ENCODE measurements at regions of chr16 and their contacts with region 1.

Region 1: GRCh38 chr16:73196670-73197069 is 148.7 kb upstream of the ZFHX3 start:
- DNase-seq: peak; percentile 43
- H3K4me3 ChIP-seq: no peak overlapping the region
- H3K27ac ChIP-seq: no peak overlapping the region
- H3K4me1 ChIP-seq: no peaks in the 10 kb centered on the region
- H3K27me3 ChIP-seq: no peaks in the 10 kb centered on the region
- CTCF ChIP-seq: peak; percentile 81 to 87

Region 2: GRCh38 chr16:72664509-72665225 is 532.0 kb before region 1 on chr16:
- CTCF ChIA-PET with region 1: no interaction called
- dilution Hi-C with region 1: no loop called
- in situ Hi-C with region 1: no loop called
- intact Hi-C with region 1: loop called (anchors 5 kb)
- DNase-seq: peak; percentile 98
- H3K4me3 ChIP-seq: peak overlapping the region; percentile 74 to 85 (median 81)
- H3K27ac ChIP-seq: peak overlapping the region; percentile 86
- H3K4me1 ChIP-seq: peaks cover 10% of the 10 kb centered on the region
- H3K27me3 ChIP-seq: no peaks in the 10 kb centered on the region
- CTCF ChIP-seq: no peak

Region 3: GRCh38 chr16:72978212-72978611 is 218.5 kb before region 1 on chr16:
- CTCF ChIA-PET with region 1: no interaction called
- dilution Hi-C with region 1: no loop called
- in situ Hi-C with region 1: no loop called
- intact Hi-C with region 1: loop called (anchors 5 kb)
- DNase-seq: no peak
- H3K4me3 ChIP-seq: no peak overlapping the region
- H3K27ac ChIP-seq: no peak overlapping the region
- H3K4me1 ChIP-seq: peaks cover under 1% of the 10 kb centered on the region
- H3K27me3 ChIP-seq: no peaks in the 10 kb centered on the region
- CTCF ChIP-seq: no peak

Region 4: DNA sequence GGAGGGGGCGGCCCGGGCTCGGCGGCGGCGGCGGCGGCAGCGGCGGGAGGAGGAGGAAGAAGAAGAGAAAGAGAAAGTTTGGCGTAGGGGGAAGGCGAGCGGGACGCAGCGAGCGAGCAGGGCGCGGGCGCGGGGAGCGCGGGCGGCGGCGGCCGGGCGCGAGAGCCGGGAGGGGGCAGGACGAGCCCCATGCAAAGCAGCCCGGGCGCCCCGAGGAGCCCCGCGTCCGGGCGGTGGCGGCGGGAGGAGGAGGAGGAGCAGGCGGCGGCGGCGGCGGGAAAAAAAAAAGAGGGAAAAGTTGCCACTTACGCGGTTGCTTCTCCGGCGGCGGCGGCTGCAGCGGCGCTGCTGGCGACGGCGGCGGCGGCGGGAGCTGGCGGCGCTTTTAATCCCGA is 138.5 kb before region 1 on chr16:
- CTCF ChIA-PET with region 1: no interaction called
- dilution Hi-C with region 1: no loop called
- in situ Hi-C with region 1: no loop called
- intact Hi-C with region 1: loop called (anchors 2 kb)
- DNase-seq: peak; percentile 54
- H3K4me3 ChIP-seq: peak overlapping the region; percentile 55 to 64 (median 61)
- H3K27ac ChIP-seq: no peak overlapping the region
- H3K4me1 ChIP-seq: peaks cover 47% of the 10 kb centered on the region
- H3K27me3 ChIP-seq: no peaks in the 10 kb centered on the region
- CTCF ChIP-seq: no peak

Region 5: DNA sequence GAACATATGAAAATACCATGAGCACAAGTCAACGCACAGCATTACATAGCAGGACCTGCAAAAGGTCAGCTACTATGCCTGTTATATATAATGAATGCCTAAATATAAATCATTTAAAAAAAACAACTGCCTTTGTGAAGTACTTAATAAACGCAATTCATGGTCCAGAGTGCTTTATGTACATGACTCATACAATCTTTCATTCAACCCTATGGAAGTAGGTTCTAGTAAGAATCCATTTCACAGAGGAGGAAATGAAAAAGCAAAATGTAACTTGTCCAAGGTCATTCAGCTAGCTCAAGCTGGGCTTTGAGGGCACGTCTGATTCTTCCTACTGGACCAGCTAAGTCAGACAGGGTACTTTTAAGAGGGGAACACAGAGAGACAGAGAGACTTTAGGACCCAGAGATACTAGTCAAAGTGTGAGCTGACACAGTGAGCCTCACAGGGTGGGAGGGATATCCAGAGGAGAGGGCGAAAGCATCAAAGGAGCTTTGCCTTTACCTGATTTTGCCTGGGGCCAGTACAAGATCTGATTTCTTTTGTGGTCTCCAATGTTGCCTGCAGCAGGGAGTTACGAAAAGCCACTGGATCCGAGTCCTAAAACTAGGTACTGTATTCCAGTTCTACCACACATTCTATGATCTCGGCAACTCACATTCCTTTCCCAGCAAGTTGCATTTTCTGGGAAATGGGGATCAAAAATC is 65.4 kb before region 1 on chr16:
- CTCF ChIA-PET with region 1: no interaction called
- dilution Hi-C with region 1: no loop called
- in situ Hi-C with region 1: no loop called
- intact Hi-C with region 1: no loop called
- DNase-seq: no peak
- H3K4me3 ChIP-seq: no peak overlapping the region
- H3K27ac ChIP-seq: no peak overlapping the region
- H3K4me1 ChIP-seq: no peaks in the 10 kb centered on the region
- H3K27me3 ChIP-seq: no peaks in the 10 kb centered on the region
- CTCF ChIP-seq: no peak

Region 6: DNA sequence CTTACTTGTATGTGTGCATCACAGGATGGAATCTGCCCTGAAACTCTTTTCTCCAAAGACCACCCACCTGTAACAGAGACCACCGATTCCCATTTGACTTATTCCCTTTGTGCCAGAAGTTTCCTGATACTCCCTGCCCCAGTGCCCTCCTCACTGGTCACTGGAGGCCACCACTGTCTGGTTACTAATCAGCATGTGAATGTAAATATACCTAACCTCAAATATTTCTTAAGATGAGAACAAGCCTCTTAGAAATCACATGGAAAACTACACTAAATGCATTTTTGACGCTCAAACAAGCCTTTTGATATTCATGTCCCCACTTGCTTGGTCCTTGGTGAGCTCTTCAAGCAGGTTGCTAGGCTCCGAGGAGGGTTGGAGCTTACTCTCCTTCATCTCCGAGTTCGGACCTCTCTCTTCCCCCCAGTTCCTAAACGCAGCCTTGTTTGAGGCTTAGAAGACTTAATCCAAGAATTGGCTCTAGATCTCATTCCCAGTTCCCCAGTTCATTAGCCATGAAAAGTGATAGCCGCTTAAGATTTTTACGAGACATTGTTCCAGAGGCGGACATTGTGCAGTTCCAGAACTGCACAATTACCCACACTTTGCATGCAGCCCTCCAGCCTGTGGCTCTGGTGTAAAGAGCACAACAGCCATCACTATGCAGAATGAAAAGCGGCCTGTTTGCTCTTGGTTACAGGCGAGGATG is 520.8 kb after region 1 on chr16:
- CTCF ChIA-PET with region 1: no interaction called
- dilution Hi-C with region 1: no loop called
- in situ Hi-C with region 1: no loop called
- intact Hi-C with region 1: no loop called
- DNase-seq: no peak
- H3K4me3 ChIP-seq: no peak overlapping the region
- H3K27ac ChIP-seq: no peak overlapping the region
- H3K4me1 ChIP-seq: no peaks in the 10 kb centered on the region
- H3K27me3 ChIP-seq: no peaks in the 10 kb centered on the region
- CTCF ChIP-seq: no peak